ENCODE measurements at regions of chr14 and their contacts with region 1.

Region 1: DNA sequence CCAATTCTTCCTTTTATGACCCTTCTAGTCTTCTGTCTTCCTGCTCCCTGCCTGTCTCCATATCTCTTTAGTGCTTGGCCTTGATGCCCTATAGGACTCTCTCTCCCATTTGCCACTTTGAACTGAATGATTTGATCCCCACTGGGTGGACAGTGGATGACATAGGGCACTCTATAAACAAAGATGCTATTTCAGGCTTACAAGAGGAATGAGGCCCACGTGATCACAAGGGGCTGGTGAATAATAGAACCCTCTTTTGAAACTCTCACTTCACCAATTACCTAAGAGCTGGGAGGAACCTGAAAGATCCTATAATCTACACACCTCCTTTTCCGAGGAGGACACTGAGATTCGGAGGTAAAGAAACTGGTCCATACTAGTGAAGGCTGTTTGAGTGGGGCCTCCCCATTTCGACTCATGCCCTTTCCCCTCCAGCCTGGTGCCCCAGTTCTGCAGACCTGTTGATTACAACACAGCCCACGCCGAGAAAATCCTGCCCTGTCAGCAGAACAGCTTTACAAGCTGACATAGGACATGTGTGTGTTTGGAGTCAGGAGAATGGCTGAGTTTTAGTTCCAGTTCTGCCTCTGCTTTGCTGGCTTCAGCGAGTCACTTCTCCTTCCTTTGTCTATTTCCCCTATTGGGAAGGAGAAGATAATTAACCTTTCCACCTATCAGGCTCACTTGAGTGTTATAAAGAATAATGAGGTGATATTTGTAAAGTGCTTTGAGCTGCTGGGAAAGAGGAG is 400.3 kb downstream of the ZFP36L1 start:
- DNase-seq: peak; percentile 46 to 50
- ATAC-seq: peak; percentile 27 to 57 (median 51)
- H3K4me3 ChIP-seq: no peak overlapping the region
- H3K27ac ChIP-seq: peak overlapping the region in 9 of 10 donors; percentile 20 to 91 (median 73)
- H3K4me1 ChIP-seq: peaks cover 12 to 74% (median 55%) of the 10 kb centered on the region in 9 donors
- H3K27me3 ChIP-seq: no peaks in the 10 kb centered on the region
- CTCF ChIP-seq: no peak

Region 2: DNA sequence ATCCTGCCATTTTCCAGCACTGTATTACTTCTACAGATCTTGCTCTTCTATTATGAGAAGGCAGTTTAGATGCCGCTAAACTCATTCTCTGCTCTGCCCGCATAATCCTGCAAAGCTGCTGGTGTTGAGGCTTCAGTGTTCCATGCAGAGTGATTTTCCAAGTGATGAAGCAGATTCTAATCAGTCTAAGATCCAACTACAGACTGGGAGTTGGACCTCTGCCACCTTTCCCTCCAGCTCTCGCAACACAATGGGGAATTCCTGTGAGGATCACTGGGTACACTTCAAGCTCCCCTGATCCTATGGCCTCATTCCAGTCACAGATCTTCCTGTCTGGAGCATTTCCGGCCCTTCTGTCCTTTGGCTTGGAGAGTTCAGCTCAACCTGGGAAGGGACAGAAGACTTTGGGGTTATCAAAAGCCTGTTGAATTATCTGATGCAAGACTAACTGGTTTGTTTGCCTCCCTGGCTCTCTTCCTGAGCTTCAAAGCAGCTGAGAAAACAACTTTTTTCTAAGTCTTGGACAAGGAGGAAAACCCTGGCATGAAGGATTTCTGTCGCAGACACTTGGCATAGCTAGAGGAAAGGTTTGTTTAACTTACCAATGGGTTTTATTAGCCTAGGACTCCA is 66.4 kb after region 1 on chr14:
- intact Hi-C with region 1: loop called in 3 of 10 experiments (anchors 10 kb)
- DNase-seq: peak in 1 of 2 donors; percentile 57
- ATAC-seq: peak; percentile 40 to 80 (median 72)
- H3K4me3 ChIP-seq: no peak overlapping the region
- H3K27ac ChIP-seq: peak overlapping the region in 8 of 10 donors; percentile 16 to 76 (median 43)
- H3K4me1 ChIP-seq: peaks cover 5 to 31% (median 26%) of the 10 kb centered on the region in 9 donors
- H3K27me3 ChIP-seq: no peaks in the 10 kb centered on the region
- CTCF ChIP-seq: no peak

Region 3: DNA sequence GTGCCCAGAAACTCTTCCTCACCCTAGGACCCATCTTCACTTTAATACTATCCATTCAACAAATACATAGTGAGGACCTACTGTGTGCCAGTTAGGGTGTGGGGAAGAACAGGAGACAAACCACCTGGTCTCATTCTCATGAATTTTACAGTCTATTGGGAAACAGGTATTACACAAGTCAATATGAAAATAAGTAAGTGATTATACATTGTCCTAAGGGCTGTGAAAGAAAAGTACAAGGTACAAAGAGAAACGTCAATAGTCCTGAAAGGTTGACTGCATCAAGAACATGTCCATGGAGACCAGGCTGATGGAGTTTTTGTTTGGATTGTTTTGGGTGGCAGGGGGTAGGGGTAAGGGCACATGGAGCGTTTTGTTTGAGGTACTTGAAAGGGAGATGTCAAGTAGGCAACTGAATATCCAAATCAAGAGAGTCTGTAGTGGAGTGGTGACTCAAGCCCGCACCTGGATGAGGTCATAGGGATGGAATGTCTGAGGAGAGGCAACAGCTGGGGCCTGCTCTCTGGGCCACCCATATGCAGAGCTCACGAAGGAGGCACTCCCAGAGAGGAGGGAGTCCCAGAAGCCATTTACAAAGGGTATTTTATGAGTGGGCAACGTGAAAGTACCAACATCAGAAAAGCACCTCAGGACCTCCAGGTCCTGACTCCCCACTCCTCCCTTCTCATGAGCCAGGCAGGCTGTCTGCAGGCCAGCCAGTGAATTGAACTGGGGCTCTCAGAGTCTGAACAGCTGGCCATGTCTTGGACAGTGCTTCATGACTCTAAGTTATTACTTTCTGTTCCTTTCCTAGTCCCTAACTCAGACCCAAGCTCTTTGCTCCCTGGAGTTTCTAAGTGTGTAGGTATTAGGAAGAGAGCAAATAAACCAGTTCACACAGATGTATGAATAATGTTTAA is 128.3 kb after region 1 on chr14:
- intact Hi-C with region 1: loop called in 1 of 10 experiments (anchors 5 kb)
- DNase-seq: no peak
- ATAC-seq: peak in 2 of 8 donors; percentile 25 to 48
- H3K4me3 ChIP-seq: no peak overlapping the region
- H3K27ac ChIP-seq: peak overlapping the region in 7 of 10 donors; percentile 33 to 73 (median 67)
- H3K4me1 ChIP-seq: peaks cover 0 to 79% (median 58%) of the 10 kb centered on the region in 9 donors
- H3K27me3 ChIP-seq: no peaks in the 10 kb centered on the region
- CTCF ChIP-seq: no peak